ENCODE measurements at regions of chr18 and their contacts with region 1.

Region 1: DNA sequence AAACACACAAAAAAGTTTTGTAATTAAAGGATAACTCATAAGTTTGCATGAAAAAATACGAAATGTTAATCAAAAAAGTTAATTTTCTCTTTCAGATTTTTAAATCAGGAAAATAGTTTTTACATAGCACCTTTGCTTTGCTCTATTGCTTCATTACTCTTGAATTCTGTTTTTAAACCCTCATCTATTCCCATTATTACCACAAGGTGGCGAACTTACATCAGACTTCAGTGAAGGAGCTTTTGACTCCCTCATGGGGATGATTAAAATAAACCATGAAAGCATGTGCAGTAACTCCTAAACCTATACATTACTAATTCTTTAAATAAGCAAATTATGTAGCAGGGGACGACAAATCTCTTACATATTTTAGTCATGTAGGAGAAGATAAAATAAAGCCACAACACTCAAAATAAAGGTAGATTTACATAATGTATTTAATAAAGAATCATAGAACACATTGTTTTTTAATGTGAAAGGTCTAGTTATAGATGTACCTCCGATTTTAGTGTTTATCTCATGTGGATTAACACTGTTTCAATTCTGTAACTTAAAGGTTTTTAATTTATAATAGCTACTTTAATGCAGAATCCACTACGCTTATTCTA is 105.2 kb downstream of the NETO1 start:
- DNase-seq: peak; percentile 12 to 45 (median 22)
- ATAC-seq: 0 out of 3 replicates have a peak, but pooled peaks have one; percentile 34
- H3K4me3 ChIP-seq: no peak overlapping the region
- H3K27ac ChIP-seq: no peak overlapping the region
- H3K4me1 ChIP-seq: no peaks in the 10 kb centered on the region
- H3K27me3 ChIP-seq: no peaks in the 10 kb centered on the region
- CTCF ChIP-seq: peak; percentile 30 to 58 (median 47); a peak in 4 of 6 replicates
- EP300 ChIP-seq: no peak
- POLR2A ChIP-seq: no peak
- RAD21 ChIP-seq: peak; percentile 67 to 78

Region 2: DNA sequence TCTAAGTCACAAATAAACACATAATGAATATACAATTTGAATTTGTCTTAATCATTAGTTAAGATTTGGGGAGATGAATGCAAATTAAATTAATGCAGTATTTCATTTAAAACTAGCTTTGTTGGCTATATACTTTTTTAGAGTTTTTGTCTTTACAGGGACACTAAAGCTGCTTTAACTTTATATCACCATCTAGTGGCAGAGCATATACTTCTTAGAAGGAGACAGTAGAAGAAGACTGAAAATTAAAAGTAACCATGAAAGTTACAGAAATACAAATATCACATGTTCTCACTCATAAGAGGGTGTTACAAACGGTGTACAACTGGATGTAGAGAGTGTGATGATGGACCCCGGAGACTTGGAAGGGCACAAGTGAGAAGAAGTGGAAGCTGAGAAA is 373.5 kb after region 1 on chr18:
- CTCF ChIA-PET with region 1: no interaction called
- POLR2A ChIA-PET with region 1: no interaction called
- in situ Hi-C with region 1: no loop called
- intact Hi-C with region 1: loop called (anchors 10 kb)
- DNase-seq: no peak
- ATAC-seq: 0 out of 3 replicates have a peak, but pooled peaks have one; percentile 40
- H3K4me3 ChIP-seq: no peak overlapping the region
- H3K27ac ChIP-seq: no peak overlapping the region
- H3K4me1 ChIP-seq: no peaks in the 10 kb centered on the region
- H3K27me3 ChIP-seq: no peaks in the 10 kb centered on the region
- CTCF ChIP-seq: 0 out of 6 replicates have a peak, but pooled peaks of 1 of the 3 experiments have one; percentile 8
- EP300 ChIP-seq: no peak
- POLR2A ChIP-seq: no peak
- RAD21 ChIP-seq: peak in 1 of 2 experiments; percentile 31; a peak in 2 of 4 replicates

Region 3: GRCh38 chr18:73842795-73843394 is 1080.3 kb after region 1 on chr18:
- CTCF ChIA-PET with region 1: interaction called, 3 read pairs
- POLR2A ChIA-PET with region 1: no interaction called
- in situ Hi-C with region 1: loop called (anchors 25 kb)
- intact Hi-C with region 1: loop called (anchors 1 kb)
- DNase-seq: peak; percentile 31 to 58 (median 46)
- ATAC-seq: peak; percentile 77
- H3K4me3 ChIP-seq: no peak overlapping the region
- H3K27ac ChIP-seq: no peak overlapping the region
- H3K4me1 ChIP-seq: no peaks in the 10 kb centered on the region
- H3K27me3 ChIP-seq: no peaks in the 10 kb centered on the region
- CTCF ChIP-seq: peak; percentile 69 to 73 (median 73)
- EP300 ChIP-seq: no peak
- POLR2A ChIP-seq: no peak
- RAD21 ChIP-seq: peak; percentile 44 to 60

Measured in K562 (cell line).